Cardiac septum (tissue), 1 donor: ENCODE measurements at regions of chr5 and their contacts with region 1.

Region 1: GRCh38 chr5:15995341-15996052 is 184.1 kb downstream of the MARCHF11 start:
- DNase-seq: no peak

Region 2: GRCh38 chr5:15013654-15014463 is 981.6 kb before region 1 on chr5:
- intact Hi-C with region 1: loop called (anchors 10 kb)
- DNase-seq: no peak

Region 3: DNA sequence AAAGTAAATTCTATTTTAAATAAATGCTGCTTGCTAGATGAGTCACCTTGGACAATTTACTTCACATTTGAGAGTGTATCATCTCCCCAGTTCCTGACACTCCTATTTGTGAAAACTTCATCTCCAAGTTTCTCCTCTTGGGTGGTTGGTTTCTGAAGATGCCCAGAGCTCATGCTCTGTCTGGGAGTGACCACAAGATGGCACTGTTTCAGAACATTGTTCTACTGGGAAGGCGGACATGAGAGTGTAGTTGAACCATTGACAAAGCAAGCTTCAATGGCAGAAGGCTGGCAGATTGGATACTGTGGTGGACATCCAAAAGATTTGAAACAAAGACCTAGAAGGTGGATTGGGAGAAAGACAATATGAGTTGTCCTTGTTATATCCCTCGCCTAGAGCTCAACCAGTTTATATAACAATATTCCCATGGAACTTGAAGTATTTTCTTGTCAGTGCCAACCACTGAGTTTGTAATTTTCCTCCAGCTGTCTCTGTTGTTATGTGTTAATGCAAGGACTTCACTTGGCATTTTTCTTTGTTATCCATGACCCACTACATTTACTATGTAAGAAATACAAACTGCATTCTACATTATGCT is 889.6 kb before region 1 on chr5:
- intact Hi-C with region 1: loop called (anchors 10 kb)
- DNase-seq: no peak

Region 4: DNA sequence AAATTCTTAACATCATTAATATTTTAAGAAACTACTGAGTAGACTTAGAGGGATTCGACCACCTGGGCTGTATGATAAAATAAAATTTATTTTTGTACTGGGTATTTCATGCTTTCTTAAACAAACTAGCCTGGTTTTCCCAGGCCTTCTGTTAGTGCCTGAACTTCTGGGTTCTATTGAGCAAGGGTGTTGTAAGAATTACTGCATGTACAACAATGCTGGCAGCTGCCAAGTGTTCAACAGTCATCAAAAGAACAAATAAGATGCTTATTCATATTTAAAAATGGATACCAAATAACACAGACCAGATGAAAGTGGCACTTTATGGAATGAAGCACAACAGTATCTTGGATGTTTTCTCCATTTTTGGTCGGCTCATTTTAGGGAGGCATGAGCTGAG is 618.7 kb before region 1 on chr5:
- intact Hi-C with region 1: loop called (anchors 10 kb)
- DNase-seq: no peak

Region 5: GRCh38 chr5:15463231-15463980 is 532.1 kb before region 1 on chr5:
- intact Hi-C with region 1: loop called (anchors 10 kb)
- DNase-seq: no peak

Region 6: GRCh38 chr5:15821506-15821905 is 174.0 kb before region 1 on chr5:
- intact Hi-C with region 1: loop called (anchors 10 kb)
- DNase-seq: no peak

Region 7: GRCh38 chr5:15885156-15885555 is 110.3 kb before region 1 on chr5:
- intact Hi-C with region 1: no loop called
- DNase-seq: no peak

Region 8: DNA sequence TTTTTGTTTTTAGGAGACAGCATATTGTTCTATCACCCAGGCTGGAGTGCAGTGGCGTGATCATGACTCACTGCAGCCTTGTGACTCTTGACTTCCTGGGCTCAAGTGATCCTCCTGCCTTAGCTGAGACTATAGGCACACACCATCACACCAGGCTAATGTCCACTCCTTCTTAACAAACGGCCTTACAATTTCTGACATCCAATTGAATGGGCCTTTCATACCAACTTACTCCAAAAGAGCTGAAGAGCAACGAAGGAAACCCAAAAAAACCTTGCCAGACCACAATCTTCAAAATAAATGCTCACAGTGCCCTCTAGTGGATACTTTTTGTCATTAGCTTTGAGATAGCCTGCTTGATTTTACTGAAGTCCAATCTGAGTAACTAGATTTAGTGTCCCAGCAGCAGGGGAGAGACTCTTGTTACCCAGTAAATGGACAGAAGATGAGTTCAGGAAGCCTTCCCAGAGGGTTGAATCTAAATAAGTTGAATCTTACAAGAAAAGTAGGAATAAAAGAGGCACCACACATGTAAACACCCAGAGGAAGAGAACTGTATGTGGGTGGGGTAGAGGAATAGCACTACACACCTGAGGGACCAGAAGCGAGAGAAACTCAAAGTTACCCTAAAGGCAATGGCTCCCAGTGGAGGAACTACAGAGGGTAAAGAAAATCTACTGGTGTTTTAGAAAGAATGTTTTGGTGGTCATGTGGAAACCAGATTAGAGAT is 460.8 kb after region 1 on chr5:
- intact Hi-C with region 1: loop called (anchors 10 kb)
- DNase-seq: no peak